ENCODE measurements at regions of chr12 and their contacts with region 1.

Region 1: GRCh38 chr12:117836999-117837736 is 131.6 kb downstream of the KSR2 start:
- DNase-seq: peak; percentile 63
- ATAC-seq: peak; percentile 36
- H3K4me3 ChIP-seq: no peak overlapping the region
- H3K4me3 Mint-ChIP-seq: peak overlapping the region; percentile 5
- H3K27ac ChIP-seq: no peak overlapping the region
- H3K27ac Mint-ChIP-seq: no peak overlapping the region
- H3K4me1 ChIP-seq: peaks cover 0 to 4% of the 10 kb centered on the region in 2 donors
- H3K4me1 Mint-ChIP-seq: peaks cover 4% of the 10 kb centered on the region
- H3K27me3 ChIP-seq: no peaks in the 10 kb centered on the region
- H3K27me3 Mint-ChIP-seq: peaks cover 19% of the 10 kb centered on the region
- CTCF ChIP-seq: peak; percentile 86

Region 2: DNA sequence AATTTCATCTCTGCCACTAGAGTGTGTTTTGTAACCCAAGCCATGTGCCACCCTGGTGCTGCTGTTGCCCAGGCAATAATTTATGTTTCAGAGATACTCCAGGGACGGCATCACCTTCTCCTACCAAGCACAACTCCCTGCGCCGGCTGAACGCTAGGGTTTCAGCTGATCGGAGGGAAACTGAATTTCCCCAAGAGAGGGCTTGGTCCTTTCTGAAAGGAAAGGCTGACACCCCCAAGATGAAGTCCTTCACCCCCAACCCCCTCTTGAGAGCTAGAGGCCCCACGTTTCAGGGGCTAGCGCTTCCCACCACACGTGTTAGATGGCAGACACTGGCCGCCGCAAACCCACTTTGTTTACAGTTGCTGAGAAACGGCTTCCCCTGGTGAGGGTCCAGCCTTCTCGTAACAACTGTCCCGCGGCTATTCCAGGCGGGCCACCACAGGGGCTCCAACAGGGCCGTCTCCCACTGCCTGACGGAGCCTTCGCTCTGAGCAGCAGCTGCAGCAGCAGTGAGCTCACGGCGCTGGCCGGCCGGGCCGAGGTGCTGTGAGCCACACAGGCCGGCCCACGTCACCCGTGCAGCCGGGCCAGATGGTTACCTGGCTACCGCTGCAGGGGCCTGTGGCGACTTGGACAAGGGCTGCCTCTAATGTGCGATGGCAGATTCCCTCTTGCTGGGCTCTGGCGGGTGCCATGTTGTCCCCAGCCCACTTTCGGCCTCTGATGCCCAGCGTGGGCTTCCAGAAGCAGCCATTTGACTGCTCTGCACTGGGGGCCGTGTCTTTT is 804.4 kb before region 1 on chr12:
- CTCF ChIA-PET with region 1: no interaction called
- POLR2A ChIA-PET with region 1: no interaction called
- intact Hi-C with region 1: no loop called
- DNase-seq: no peak
- ATAC-seq: peak; percentile 51
- H3K4me3 ChIP-seq: no peak overlapping the region
- H3K4me3 Mint-ChIP-seq: peak overlapping the region; percentile 75
- H3K27ac ChIP-seq: no peak overlapping the region
- H3K27ac Mint-ChIP-seq: no peak overlapping the region
- H3K4me1 ChIP-seq: peaks cover 6 to 21% of the 10 kb centered on the region in 2 donors
- H3K4me1 Mint-ChIP-seq: peaks cover 22% of the 10 kb centered on the region
- H3K27me3 ChIP-seq: peaks cover 0 to 16% (median 0%) of the 10 kb centered on the region in 4 experiments
- H3K27me3 Mint-ChIP-seq: peaks cover 3% of the 10 kb centered on the region
- CTCF ChIP-seq: no peak

Region 3: DNA sequence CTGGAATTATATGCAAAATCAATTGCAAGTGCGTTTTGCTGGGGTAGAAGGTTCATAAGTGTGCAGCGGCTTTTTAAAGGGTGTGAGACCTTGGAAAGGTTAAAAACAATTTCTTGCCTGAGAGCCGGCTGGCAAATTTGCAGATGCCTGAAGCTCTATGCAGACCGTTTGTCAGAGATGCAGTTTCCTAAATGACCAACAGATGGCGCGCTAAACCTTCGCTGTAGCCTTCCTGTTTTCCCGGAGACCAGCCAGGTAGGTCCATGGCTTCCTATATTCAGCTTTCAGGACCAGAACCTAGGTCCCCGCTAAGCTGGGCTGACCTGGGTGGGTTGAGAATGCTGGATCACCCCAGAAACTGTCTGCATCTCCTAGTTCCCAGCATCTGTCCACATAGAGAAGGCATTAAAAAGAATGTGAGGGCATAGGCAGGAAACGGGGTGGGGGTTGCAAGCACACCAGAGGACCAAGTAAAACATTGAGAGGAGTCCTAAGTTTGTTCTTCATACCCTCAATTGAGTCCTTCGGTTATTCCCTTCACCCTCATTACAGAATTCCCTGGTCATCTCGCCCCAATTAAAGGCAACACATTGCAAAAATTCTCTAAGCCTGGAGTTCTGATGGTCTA is 470.0 kb before region 1 on chr12:
- CTCF ChIA-PET with region 1: no interaction called
- POLR2A ChIA-PET with region 1: no interaction called
- intact Hi-C with region 1: loop called (anchors 5 kb)
- DNase-seq: peak; percentile 36
- ATAC-seq: no peak
- H3K4me3 ChIP-seq: no peak overlapping the region
- H3K4me3 Mint-ChIP-seq: no peak overlapping the region
- H3K27ac ChIP-seq: no peak overlapping the region
- H3K27ac Mint-ChIP-seq: no peak overlapping the region
- H3K4me1 ChIP-seq: no peaks in the 10 kb centered on the region
- H3K4me1 Mint-ChIP-seq: no peaks in the 10 kb centered on the region
- H3K27me3 ChIP-seq: peaks cover 0 to 33% (median 5%) of the 10 kb centered on the region in 4 experiments
- H3K27me3 Mint-ChIP-seq: peaks cover 37% of the 10 kb centered on the region
- CTCF ChIP-seq: peak; percentile 64

Region 4: DNA sequence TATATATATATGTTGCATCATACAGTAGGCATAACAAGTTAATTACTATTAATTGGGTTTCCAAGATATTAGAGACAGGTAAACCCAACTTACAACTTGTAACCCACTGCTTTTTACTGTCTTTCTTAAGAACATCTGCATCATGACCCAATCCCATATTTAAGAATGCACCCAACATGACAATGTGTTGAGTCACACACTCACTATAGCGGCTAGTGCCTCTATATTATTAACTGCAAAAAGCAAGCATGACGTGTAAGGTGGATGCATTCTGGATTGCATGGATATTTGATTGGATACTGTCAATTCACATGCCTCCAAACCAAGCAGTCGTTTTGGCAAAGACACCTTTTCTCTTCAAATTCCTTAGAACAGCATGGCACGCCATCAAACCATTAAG is 63.4 kb after region 1 on chr12:
- CTCF ChIA-PET with region 1: no interaction called
- POLR2A ChIA-PET with region 1: no interaction called
- intact Hi-C with region 1: no loop called
- DNase-seq: no peak
- ATAC-seq: no peak
- H3K4me3 ChIP-seq: no peak overlapping the region
- H3K4me3 Mint-ChIP-seq: no peak overlapping the region
- H3K27ac ChIP-seq: no peak overlapping the region
- H3K27ac Mint-ChIP-seq: no peak overlapping the region
- H3K4me1 ChIP-seq: peaks cover 0 to 9% of the 10 kb centered on the region in 2 donors
- H3K4me1 Mint-ChIP-seq: no peaks in the 10 kb centered on the region
- H3K27me3 ChIP-seq: peaks cover 0 to 7% (median 0%) of the 10 kb centered on the region in 4 experiments
- H3K27me3 Mint-ChIP-seq: peaks cover 9% of the 10 kb centered on the region
- CTCF ChIP-seq: no peak